Activated naive CD4-positive, alpha-beta T cell treated with anti-CD3 and anti-CD28 coated beads, Interleukin-2, amount 10 ng/mL, durations not matched to agents 7 days and 5 days (primary cell): ENCODE measurements at regions of chr1 and their contacts with region 1.

Region 1: GRCh38 chr1:203673550-203674427 is 47.2 kb downstream of the ATP2B4 start:
- DNase-seq: peak; percentile 82
- H3K4me3 Mint-ChIP-seq: peak overlapping the region; percentile 49
- H3K27ac Mint-ChIP-seq: peak overlapping the region; percentile 95
- H3K4me1 Mint-ChIP-seq: peaks cover 58% of the 10 kb centered on the region
- H3K27me3 Mint-ChIP-seq: no peaks in the 10 kb centered on the region

Region 2: DNA sequence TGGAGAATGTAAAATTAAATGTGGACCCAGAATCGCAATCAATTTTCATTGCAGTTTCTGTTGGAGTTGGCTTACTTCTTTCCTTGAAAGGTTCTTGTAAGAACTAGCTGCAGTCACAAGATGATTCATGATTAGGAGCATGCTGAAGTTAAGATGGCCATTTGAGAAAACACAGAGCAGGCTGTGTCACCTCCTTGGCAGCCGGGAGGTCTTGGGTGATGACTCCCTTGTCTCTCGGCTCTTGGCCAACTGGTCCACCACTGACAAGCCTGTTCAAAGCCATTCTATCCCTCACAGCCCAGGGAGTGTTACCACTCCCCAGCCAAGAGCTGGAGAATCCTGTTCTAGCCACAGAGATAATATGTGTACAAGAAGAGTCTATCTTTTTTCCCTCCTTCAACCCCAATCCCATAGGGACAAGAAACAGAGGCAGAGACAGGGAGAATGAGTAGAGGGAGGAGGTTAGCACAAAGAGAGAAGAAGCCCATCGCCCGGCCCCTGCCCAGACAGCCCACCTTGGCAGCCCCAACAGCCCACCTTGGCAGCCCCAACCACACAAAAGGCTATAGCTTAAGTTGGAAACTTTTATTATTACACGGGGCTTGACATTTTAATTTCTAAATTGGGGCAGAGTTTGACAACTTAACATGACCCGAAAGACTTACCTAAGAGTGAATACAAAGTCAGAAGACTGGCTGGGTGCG is 139.1 kb before region 1 on chr1:
- CTCF ChIA-PET with region 1: no interaction called
- DNase-seq: no peak
- H3K4me3 Mint-ChIP-seq: no peak overlapping the region
- H3K27ac Mint-ChIP-seq: no peak overlapping the region
- H3K4me1 Mint-ChIP-seq: no peaks in the 10 kb centered on the region
- H3K27me3 Mint-ChIP-seq: peaks cover 11% of the 10 kb centered on the region

Region 3: GRCh38 chr1:203593723-203594122 is 80.1 kb before region 1 on chr1:
- CTCF ChIA-PET with region 1: interaction called, 12 read pairs
- DNase-seq: peak; percentile 71
- H3K4me3 Mint-ChIP-seq: no peak overlapping the region
- H3K27ac Mint-ChIP-seq: no peak overlapping the region
- H3K4me1 Mint-ChIP-seq: peaks cover 17% of the 10 kb centered on the region
- H3K27me3 Mint-ChIP-seq: peaks cover 40% of the 10 kb centered on the region

Region 4: DNA sequence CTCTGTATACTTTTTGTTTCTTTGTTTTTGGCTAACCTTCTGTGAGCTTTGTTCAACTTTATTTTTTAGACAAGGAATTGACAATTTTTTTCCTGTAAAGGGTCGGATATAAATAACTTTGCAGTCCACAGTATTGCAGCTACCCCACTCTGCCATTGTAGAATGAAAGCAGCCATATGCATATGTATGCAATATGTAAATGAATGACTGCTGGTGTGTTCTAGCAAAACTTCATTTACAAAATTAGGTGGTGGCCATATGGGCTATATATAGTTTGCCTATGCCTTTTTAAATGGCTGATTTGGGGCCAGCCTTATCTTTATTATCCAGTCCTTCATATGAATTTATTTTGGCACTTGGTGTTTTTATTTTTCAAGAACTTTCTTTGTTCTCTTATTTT is 169.6 kb after region 1 on chr1:
- CTCF ChIA-PET with region 1: no interaction called
- DNase-seq: no peak
- H3K4me3 Mint-ChIP-seq: no peak overlapping the region
- H3K27ac Mint-ChIP-seq: no peak overlapping the region
- H3K4me1 Mint-ChIP-seq: no peaks in the 10 kb centered on the region
- H3K27me3 Mint-ChIP-seq: no peaks in the 10 kb centered on the region